ENCODE measurements at regions of chr17 and their contacts with region 1.

Region 1: DNA sequence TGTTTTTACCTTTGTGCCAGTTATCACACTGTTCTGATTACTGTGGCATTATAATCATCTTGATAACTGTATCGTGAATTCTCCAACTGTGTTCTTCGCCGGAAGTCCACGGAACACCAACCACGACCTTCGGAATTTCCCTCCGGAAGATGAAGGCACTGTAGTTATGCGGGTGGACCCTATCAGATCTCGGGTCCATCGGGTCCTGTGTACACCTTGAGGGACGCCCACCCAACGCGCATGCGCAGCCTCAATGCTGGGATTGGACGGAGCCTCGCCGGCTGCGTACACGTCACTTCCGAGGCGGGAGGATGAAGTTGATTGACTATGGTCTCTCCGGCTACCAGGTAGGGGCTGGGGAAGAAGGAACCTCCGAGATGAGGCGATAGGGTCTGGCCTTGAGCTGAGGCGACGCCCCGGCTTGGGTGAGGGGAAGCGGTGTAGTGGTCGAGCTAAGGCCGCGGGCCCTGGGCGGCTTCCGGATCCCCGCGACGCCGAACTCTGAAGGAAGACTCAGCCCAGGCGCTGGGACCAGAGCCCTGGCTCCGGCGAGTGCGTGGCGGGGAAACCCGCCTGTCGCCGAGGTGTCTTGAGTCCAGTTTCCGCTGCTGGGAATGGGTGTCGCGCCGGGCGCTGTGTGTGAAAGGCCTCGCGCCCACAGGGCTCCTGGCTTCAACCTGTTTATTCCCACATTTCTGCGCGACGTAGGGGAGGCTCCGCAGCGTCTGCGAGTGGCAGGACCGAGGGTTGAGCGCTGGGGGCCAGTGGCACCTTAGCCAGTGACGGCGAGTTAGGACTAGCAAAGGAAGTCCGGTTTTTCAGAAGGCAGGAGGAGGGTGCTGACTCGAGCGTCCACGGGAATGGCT is at the start of gene DHRS7B:
- DNase-seq: peak; percentile 94 to 95 (median 95)
- H3K4me3 ChIP-seq: peak within 1 kb of the TSS; percentile 67 to 98 (median 88)
- H3K27ac ChIP-seq: peak within 1 kb of the TSS; percentile 95 to 96
- H3K4me1 ChIP-seq: peaks cover 24 to 57% (median 41%) of the 10 kb centered on the region in 4 experiments
- H3K27me3 ChIP-seq: no peaks in the 10 kb centered on the region

Region 2: DNA sequence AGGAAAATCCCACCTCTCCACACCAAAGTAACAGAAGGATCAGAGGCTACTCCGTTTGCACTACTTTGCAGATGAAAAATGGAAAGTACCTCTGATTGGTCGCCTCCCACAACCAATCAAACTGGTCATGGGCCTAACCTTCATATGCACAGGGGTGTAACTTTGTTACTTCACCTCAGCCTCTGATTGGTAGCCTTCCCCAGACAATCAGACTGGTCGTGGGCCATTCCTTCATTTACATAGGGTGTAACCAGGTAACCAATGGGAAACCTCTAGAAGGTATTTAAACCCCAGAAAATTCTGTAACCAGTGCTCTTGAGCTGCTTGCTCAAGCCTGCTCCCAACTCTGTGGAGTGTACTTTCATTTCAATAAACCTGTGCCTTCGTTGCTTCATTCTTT is 44.9 kb before region 1 on chr17:
- CTCF ChIA-PET with region 1: no interaction called
- POLR2A ChIA-PET with region 1: no interaction called
- DNase-seq: no peak
- H3K4me3 ChIP-seq: no peak overlapping the region
- H3K27ac ChIP-seq: no peak overlapping the region
- H3K4me1 ChIP-seq: peaks cover 0 to 13% (median 6%) of the 10 kb centered on the region in 4 experiments
- H3K27me3 ChIP-seq: no peaks in the 10 kb centered on the region

Region 3: DNA sequence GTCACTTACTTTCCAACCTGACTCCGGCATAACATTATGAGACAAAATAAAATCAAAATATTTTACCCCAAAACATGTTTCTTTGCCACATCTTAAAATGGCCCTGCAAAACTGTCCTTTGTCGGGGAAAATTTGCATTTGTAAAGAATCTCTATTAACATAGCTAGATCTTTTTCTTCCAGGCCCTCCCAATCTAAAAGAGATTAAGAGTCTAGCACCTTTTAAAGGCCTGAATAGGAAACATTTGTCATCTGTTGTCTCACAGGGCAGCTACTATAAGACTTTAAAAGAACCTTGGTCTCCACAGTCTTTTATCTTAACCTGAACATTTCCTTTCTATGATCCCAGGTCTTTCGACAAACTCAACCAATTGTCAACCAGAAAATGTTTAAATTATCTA is 18.2 kb before region 1 on chr17:
- CTCF ChIA-PET with region 1: interaction called, 10 read pairs
- POLR2A ChIA-PET with region 1: no interaction called
- DNase-seq: no peak
- H3K4me3 ChIP-seq: no peak overlapping the region
- H3K27ac ChIP-seq: no peak overlapping the region
- H3K4me1 ChIP-seq: peaks cover 0 to 7% (median 2%) of the 10 kb centered on the region in 4 experiments
- H3K27me3 ChIP-seq: no peaks in the 10 kb centered on the region

Region 4: GRCh38 chr17:21140911-21141310 is 14.0 kb after region 1 on chr17:
- CTCF ChIA-PET with region 1: interaction called, 14 read pairs
- POLR2A ChIA-PET with region 1: no interaction called
- DNase-seq: no peak
- H3K4me3 ChIP-seq: no peak overlapping the region
- H3K27ac ChIP-seq: no peak overlapping the region
- H3K4me1 ChIP-seq: peaks cover 0 to 4% (median 3%) of the 10 kb centered on the region in 4 experiments
- H3K27me3 ChIP-seq: no peaks in the 10 kb centered on the region

Region 5: GRCh38 chr17:21146362-21147015 is 19.6 kb after region 1 on chr17:
- CTCF ChIA-PET with region 1: interaction called, 14 read pairs
- POLR2A ChIA-PET with region 1: no interaction called
- DNase-seq: peak in 2 of 3 donors; percentile 60 to 67
- H3K4me3 ChIP-seq: peak overlapping the region in 1 of 7 experiments; percentile 20
- H3K27ac ChIP-seq: peak overlapping the region in 1 of 2 experiments; percentile 35
- H3K4me1 ChIP-seq: peaks cover 4 to 31% (median 28%) of the 10 kb centered on the region in 4 experiments
- H3K27me3 ChIP-seq: no peaks in the 10 kb centered on the region

Region 6: DNA sequence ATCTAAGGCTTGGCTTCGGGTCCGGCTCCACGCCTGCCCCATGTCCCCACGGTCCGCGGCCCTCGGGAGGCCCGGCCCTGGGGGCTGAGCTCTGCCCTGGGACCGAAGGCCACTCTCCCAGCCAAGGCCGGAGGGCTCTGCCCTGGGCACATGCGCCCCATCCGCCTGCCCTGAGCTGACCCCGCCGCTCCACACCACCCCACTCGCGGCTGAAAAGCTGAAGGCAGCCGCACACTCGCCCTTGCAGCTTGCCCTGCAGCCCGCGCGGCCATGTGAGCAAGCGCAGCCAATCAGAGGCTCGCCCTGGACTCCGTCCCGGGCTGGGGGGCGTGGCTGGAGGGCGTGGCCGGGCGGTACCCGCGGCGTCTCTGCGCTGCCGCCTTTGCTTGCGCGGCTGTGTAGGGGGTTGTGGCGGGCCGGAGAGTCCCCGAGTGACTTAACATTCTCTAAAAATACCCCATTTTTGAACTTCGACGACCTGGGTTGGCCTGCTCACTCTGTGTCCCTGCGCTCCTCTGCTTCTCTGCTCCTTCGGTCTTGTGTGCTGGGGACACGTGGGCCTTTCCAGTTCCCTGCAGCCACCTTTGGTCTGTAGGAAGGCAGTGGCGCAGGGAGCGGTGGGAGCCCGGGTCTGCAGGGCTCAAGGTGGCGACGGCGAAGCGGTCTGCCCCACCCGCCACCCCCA is 148.8 kb after region 1 on chr17:
- CTCF ChIA-PET with region 1: interaction called, 26 read pairs
- POLR2A ChIA-PET with region 1: interaction called, 3 read pairs
- DNase-seq: peak; percentile 83 to 92 (median 92)
- H3K4me3 ChIP-seq: peak overlapping the region; percentile 46 to 80 (median 68)
- H3K27ac ChIP-seq: no peak overlapping the region
- H3K4me1 ChIP-seq: peaks cover 4 to 45% (median 33%) of the 10 kb centered on the region in 4 experiments
- H3K27me3 ChIP-seq: peaks cover 0 to 3% (median 0%) of the 10 kb centered on the region in 5 experiments

Region 7: DNA sequence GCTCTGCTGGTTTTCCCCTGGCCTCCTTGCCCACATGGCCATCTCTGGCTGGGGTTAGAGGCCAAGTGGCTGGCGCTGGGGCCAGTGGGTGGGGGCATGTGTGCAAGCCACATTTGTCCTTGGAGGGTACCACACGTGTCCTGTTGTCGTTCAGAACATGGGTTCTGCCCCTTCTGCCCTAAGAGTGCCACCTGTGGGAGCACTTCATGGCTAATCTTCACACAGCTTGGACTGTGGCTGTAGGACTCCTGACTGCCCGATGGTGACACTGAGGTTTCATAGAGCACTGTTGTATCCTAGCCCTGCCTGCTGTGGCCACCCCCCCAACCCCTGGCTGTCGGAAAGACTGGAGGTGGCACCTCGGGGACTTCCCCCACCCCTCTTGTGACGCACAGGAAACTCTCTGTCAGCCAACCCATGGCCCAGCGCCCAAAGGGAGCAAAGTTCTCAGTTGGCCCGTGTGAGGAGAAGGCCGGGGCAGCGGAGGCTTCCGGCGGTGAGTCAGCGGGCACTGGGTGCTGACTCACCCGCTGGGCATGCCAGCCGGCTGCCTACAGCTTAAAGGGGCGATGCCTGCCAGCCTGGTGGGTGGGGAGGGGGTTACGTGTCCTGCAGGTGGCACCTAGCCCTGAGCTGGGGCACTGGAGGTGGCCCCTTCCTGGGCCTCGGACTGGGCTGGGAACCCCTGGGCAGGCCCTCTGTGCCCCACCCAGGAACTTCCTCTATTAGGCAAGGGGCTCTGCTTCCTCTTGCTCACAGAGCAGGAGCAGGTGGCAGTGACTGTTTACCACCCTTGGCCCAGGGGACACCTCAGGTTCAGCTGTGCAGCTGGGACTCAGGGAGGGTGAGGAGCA is 160.9 kb after region 1 on chr17:
- CTCF ChIA-PET with region 1: interaction called, 16 read pairs
- POLR2A ChIA-PET with region 1: interaction called, 5 read pairs
- DNase-seq: peak; percentile 99 to 100 (median 99)
- H3K4me3 ChIP-seq: peak overlapping the region in 6 of 7 experiments; percentile 31 to 95 (median 89)
- H3K27ac ChIP-seq: peak overlapping the region; percentile 96 to 97
- H3K4me1 ChIP-seq: peaks cover 10 to 60% (median 58%) of the 10 kb centered on the region in 4 experiments
- H3K27me3 ChIP-seq: no peaks in the 10 kb centered on the region

Region 8: GRCh38 chr17:21511363-21512198 is 384.7 kb after region 1 on chr17:
- CTCF ChIA-PET with region 1: interaction called, 11 read pairs
- POLR2A ChIA-PET with region 1: no interaction called
- DNase-seq: peak; percentile 61 to 76 (median 68)
- H3K4me3 ChIP-seq: peak overlapping the region; percentile 20 to 82 (median 57)
- H3K27ac ChIP-seq: no peak overlapping the region
- H3K4me1 ChIP-seq: peaks cover 0 to 31% (median 13%) of the 10 kb centered on the region in 4 experiments
- H3K27me3 ChIP-seq: peaks cover 0 to 12% (median 0%) of the 10 kb centered on the region in 5 experiments

Measured in common myeloid progenitor, CD34-positive (primary cell).